Transverse colon (tissue), 4 donors: ENCODE measurements at regions of chr1 and their contacts with region 1.

Region 1: GRCh38 chr1:181088079-181089016 is at the start of gene IER5:
- DNase-seq: peak; percentile 99
- H3K4me3 ChIP-seq: peak within 1 kb of the TSS; percentile 48 to 96 (median 94)
- H3K27ac ChIP-seq: peak within 1 kb of the TSS; percentile 93 to 99 (median 96)
- H3K4me1 ChIP-seq: peaks cover 14 to 44% (median 27%) of the 10 kb centered on the region in 4 donors
- H3K27me3 ChIP-seq: no peaks in the 10 kb centered on the region
- CTCF ChIP-seq: no peak
- EP300 ChIP-seq: no peak
- POLR2A ChIP-seq: peak; percentile 100
- total RNA-seq, gene IER5: 12.1 to 40.3 (median 16.5) TPM

Region 2: GRCh38 chr1:181021811-181022434 is 66.4 kb before region 1 on chr1:
- in situ Hi-C with region 1: no loop called
- intact Hi-C with region 1: loop called (anchors 2 kb)
- DNase-seq: peak; percentile 62
- H3K4me3 ChIP-seq: peak overlapping the region; percentile 65 to 95 (median 82)
- H3K27ac ChIP-seq: peak overlapping the region; percentile 83 to 97 (median 90)
- H3K4me1 ChIP-seq: peaks cover 6 to 32% (median 23%) of the 10 kb centered on the region in 4 donors
- H3K27me3 ChIP-seq: no peaks in the 10 kb centered on the region
- CTCF ChIP-seq: no peak
- EP300 ChIP-seq: no peak
- POLR2A ChIP-seq: no peak

Region 3: DNA sequence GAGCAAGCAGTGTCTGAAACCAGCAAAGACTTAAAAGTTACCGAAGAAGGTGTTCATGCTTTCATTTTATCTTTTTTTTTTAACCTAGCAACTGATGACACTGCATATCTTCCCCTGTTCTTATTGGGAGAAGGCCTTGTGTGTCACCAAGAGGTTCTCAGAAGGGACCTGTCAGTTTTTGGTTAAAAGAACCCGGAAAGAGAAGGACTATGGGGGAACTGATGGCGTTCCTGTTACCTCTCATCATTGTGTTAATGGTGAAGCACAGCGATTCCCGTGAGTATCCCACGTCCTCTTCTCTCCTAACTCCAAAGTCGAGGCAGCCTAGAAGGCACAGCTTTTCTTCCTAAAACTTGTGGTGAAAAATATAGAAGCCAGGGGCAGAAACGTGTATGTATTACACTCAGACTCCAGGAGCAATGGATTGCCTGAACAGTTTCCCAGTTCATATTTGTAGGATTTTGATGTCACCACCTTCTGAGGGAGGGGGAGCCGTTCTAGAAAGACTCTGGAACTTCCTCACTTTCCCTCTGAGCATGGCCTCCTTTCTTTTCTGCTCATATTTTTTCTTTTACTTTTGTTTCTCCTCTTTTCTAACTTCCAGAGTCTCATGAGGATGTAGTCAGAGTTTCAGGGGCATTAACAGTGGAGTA is 54.4 kb before region 1 on chr1 and contains the start of gene MR1:
- in situ Hi-C with region 1: no loop called
- intact Hi-C with region 1: loop called (anchors 5 kb)
- DNase-seq: no peak
- H3K4me3 ChIP-seq: peak within 1 kb of the TSS; percentile 4 to 47 (median 28)
- H3K27ac ChIP-seq: peak within 1 kb of the TSS; percentile 82 to 97 (median 86)
- H3K4me1 ChIP-seq: peaks cover 0 to 34% (median 19%) of the 10 kb centered on the region in 4 donors
- H3K27me3 ChIP-seq: no peaks in the 10 kb centered on the region
- CTCF ChIP-seq: no peak
- EP300 ChIP-seq: no peak
- POLR2A ChIP-seq: peak; percentile 51
- total RNA-seq, gene MR1: 1.00 to 8.6 (median 4.7) TPM

Region 4: DNA sequence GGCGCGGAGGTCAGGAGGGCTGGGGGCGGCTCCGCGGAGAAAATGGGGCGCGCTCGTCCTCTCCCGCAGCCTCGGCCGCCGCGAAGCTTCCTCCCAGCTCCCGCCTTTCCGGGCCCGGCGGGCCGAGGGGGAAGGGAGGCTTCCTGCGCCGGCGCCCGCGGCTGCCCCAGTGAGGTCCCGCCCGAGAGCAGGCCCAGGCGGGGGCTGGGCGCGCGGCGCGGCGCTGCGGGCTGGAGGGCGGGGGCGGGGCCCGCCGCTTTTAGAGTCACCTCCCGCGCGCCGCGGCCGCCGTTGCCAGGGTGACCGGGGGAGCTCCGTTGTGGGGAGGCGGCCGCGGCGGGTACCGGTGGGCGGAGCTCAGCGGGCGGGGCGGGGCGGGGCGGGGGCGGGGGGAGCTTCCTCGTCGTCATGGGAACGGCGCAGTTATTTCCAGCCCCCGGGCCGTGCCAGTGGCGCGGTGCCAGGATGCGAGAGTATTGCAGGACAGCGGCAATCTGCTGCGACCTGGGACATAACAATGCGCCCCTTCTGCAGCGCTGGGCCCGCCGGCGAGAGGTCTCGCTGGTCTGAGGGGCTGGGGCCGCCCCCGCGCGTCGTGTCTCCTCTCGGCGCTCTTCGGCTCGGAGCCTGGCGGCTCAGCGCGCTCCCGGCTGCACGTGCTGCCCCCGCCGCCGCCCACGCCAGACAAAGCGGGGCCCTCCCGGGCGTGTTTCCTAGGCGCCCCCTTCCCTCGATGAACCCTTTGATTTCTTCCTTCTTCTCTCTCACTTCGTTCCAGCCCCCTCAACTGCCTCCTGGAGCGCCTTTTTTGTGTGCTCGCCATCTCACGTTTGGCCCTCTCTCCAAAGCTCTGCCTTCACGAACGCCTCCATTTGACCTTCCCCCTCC is 17.0 kb after region 1 on chr1:
- in situ Hi-C with region 1: no loop called
- intact Hi-C with region 1: loop called (anchors 2 kb)
- DNase-seq: peak; percentile 96
- H3K4me3 ChIP-seq: peak overlapping the region; percentile 48 to 83 (median 75)
- H3K27ac ChIP-seq: peak overlapping the region; percentile 84 to 90 (median 88)
- H3K4me1 ChIP-seq: peaks cover 6 to 34% (median 22%) of the 10 kb centered on the region in 4 donors
- H3K27me3 ChIP-seq: no peaks in the 10 kb centered on the region
- CTCF ChIP-seq: no peak
- EP300 ChIP-seq: no peak
- POLR2A ChIP-seq: peak; percentile 83

Region 5: GRCh38 chr1:181142096-181142958 is 54.0 kb after region 1 on chr1:
- in situ Hi-C with region 1: loop called (anchors 5 to 10 kb)
- intact Hi-C with region 1: loop called (anchors 5 kb)
- DNase-seq: peak; percentile 90
- H3K4me3 ChIP-seq: peak overlapping the region in 2 of 4 donors; percentile 20 to 21
- H3K27ac ChIP-seq: peak overlapping the region in 2 of 4 donors; percentile 34 to 49
- H3K4me1 ChIP-seq: peaks cover 0 to 12% (median 5%) of the 10 kb centered on the region in 4 donors
- H3K27me3 ChIP-seq: no peaks in the 10 kb centered on the region
- CTCF ChIP-seq: peak; percentile 96 to 98 (median 97)
- EP300 ChIP-seq: no peak
- POLR2A ChIP-seq: no peak

Region 6: GRCh38 chr1:181149326-181150240 is 61.2 kb after region 1 on chr1:
- in situ Hi-C with region 1: loop called (anchors 5 to 10 kb)
- intact Hi-C with region 1: loop called (anchors 5 kb)
- DNase-seq: peak; percentile 67
- H3K4me3 ChIP-seq: no peak overlapping the region
- H3K27ac ChIP-seq: peak overlapping the region in 3 of 4 donors; percentile 1 to 5 (median 3)
- H3K4me1 ChIP-seq: peaks cover 9 to 26% (median 15%) of the 10 kb centered on the region in 4 donors
- H3K27me3 ChIP-seq: no peaks in the 10 kb centered on the region
- CTCF ChIP-seq: no peak
- EP300 ChIP-seq: no peak
- POLR2A ChIP-seq: no peak

Region 7: GRCh38 chr1:181712711-181713110 is 624.4 kb after region 1 on chr1:
- in situ Hi-C with region 1: no loop called
- intact Hi-C with region 1: no loop called
- DNase-seq: no peak
- H3K4me3 ChIP-seq: no peak overlapping the region
- H3K27ac ChIP-seq: no peak overlapping the region
- H3K4me1 ChIP-seq: no peaks in the 10 kb centered on the region
- H3K27me3 ChIP-seq: no peaks in the 10 kb centered on the region
- CTCF ChIP-seq: no peak
- EP300 ChIP-seq: no peak
- POLR2A ChIP-seq: no peak